ENCODE measurements at regions of chr3 and their contacts with region 1.

Region 1: GRCh38 chr3:120506828-120507774 is 56.3 kb upstream of the FSTL1 start:
- DNase-seq: peak; percentile 64
- H3K4me3 ChIP-seq: no peak overlapping the region
- H3K27ac ChIP-seq: peak overlapping the region; percentile 41
- H3K4me1 ChIP-seq: no peaks in the 10 kb centered on the region
- H3K27me3 ChIP-seq: no peaks in the 10 kb centered on the region
- CTCF ChIP-seq: peak; percentile 56

Region 2: GRCh38 chr3:120417272-120417911 is 89.7 kb before region 1 on chr3:
- intact Hi-C with region 1: loop called (anchors 5 kb)
- DNase-seq: peak; percentile 97
- H3K4me3 ChIP-seq: peak overlapping the region; percentile 6
- H3K27ac ChIP-seq: peak overlapping the region; percentile 68
- H3K4me1 ChIP-seq: peaks cover 3% of the 10 kb centered on the region
- H3K27me3 ChIP-seq: no peaks in the 10 kb centered on the region
- CTCF ChIP-seq: peak; percentile 87

Region 3: DNA sequence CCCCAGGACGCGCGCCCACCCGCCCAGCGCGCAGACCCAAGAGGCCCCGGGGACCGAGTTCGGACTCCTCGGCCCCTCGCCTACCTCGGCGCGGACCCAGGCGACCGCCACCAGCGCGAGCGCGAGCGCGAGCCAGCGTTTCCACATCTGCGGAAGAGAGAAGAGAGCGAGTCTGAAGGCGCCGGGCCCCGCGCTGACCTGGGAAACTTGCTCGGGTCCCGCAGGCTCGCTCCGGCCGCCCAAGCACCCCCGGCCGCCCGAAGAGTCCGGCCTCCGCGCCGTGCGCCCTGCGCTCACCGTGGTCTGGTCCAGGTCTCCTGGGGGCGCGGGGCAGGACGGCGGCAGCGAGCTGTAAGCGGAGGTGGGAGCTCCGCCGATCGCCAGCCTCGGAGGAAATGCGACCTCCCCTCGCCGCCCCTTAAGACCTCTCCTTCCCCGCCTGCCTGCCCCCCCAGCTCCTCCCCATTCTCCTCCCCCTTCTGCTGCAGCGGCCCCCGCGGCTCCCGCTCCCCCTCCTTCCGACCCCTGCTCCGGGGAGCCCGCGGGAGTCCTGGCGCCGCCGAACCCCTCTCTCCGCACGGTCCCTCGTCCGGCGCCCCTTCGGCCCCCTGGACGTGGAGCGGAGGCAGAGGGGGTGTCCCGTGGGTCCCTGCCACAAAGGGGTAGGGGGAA is 56.4 kb before region 1 on chr3 and contains the start of gene FSTL1:
- intact Hi-C with region 1: no loop called
- DNase-seq: peak; percentile 33
- H3K4me3 ChIP-seq: peak within 1 kb of the TSS; percentile 73
- H3K27ac ChIP-seq: peak within 1 kb of the TSS; percentile 73
- H3K4me1 ChIP-seq: peaks cover 7% of the 10 kb centered on the region
- H3K27me3 ChIP-seq: peaks cover 6% of the 10 kb centered on the region
- CTCF ChIP-seq: no peak
- total RNA-seq, gene FSTL1: 20.4 to 81.8 TPM

Region 4: GRCh38 chr3:120780977-120781376 is 273.9 kb after region 1 on chr3:
- intact Hi-C with region 1: no loop called
- DNase-seq: peak; percentile 21
- H3K4me3 ChIP-seq: no peak overlapping the region
- H3K27ac ChIP-seq: no peak overlapping the region
- H3K4me1 ChIP-seq: no peaks in the 10 kb centered on the region
- H3K27me3 ChIP-seq: no peaks in the 10 kb centered on the region
- CTCF ChIP-seq: no peak

Measured in colonic mucosa (tissue), 4 donors.